ENCODE measurements at regions of chr1 and their contacts with region 1.

Region 1: DNA sequence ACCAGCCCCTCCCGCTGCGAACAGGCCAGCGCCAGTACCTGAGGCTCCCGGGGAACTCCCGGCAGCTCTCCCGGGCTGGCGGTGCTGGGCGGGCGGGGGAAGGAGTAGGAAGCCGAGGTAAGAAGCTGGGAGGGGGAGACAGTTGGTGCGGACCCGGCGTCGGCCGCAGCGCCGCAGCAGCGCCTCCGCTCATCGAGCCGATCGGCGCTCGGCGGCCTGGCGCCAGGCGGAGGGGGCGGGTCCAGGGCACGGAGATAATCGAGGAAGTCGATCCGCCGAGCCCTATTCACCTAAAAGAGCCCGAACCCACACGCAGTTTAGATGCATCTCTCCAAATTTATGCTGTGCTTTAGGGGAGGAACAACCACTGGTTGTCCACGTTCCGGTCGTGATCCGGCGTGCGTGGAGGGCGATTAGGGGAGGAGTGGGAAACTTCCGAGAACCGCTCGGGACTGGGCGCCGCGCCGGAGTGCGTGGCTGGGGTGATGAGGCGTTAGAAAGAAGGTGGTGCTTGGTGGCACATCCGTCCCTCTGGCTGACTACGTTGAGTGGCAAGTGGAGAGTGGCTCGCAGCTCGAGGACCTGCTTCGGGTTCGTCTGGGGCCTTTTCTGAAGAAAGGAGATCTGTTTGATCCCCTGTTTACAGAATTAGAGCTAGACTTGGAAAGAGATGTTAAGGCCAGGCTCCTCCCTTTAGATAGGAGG is at the start of gene VAMP4:
- DNase-seq: peak; percentile 76 to 91 (median 85)
- ATAC-seq: peak; percentile 92 to 93 (median 92)
- H3K4me3 ChIP-seq: peak within 1 kb of the TSS; percentile 80 to 95
- H3K4me3 Mint-ChIP-seq: peak within 1 kb of the TSS; percentile 95 to 100 (median 99)
- H3K27ac ChIP-seq: peak within 1 kb of the TSS; percentile 99
- H3K27ac Mint-ChIP-seq: peak within 1 kb of the TSS; percentile 100
- H3K4me1 ChIP-seq: peaks cover 15 to 21% of the 10 kb centered on the region in 2 experiments
- H3K4me1 Mint-ChIP-seq: peaks cover 55 to 59% (median 56%) of the 10 kb centered on the region in 3 donors
- H3K27me3 ChIP-seq: no peaks in the 10 kb centered on the region
- H3K27me3 Mint-ChIP-seq: no peaks in the 10 kb centered on the region
- total RNA-seq, gene VAMP4: 17.8 to 39.9 (median 33.9) TPM

Region 2: DNA sequence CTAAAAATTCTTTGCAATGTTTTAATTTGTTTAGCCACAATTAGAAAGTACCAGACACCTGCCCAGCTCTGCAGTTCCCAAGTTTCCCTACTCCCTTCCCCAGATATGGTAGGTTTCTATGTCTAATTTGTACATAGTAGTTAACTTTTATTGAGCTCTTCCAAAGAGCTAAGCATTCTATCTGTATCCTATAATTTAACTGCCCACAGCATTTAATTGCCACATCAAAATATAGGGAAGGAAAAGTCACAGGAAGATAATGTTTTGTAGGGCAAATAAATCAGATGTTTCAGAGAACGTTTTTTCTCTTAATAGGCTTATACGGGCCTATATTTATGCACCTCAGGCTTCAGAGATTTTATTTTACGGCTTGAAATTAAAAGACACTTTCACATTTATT is 667.0 kb before region 1 on chr1:
- CTCF ChIA-PET with region 1: no interaction called
- POLR2A ChIA-PET with region 1: no interaction called
- DNase-seq: no peak
- ATAC-seq: no peak
- H3K4me3 ChIP-seq: no peak overlapping the region
- H3K4me3 Mint-ChIP-seq: no peak overlapping the region
- H3K27ac ChIP-seq: no peak overlapping the region
- H3K27ac Mint-ChIP-seq: no peak overlapping the region
- H3K4me1 ChIP-seq: no peaks in the 10 kb centered on the region
- H3K4me1 Mint-ChIP-seq: no peaks in the 10 kb centered on the region
- H3K27me3 ChIP-seq: no peaks in the 10 kb centered on the region
- H3K27me3 Mint-ChIP-seq: peaks cover 1 to 3% of the 10 kb centered on the region in 2 donors

Region 3: GRCh38 chr1:171781176-171781875 is 39.3 kb after region 1 on chr1 and contains the start of gene METTL13:
- CTCF ChIA-PET with region 1: interaction called in 1 of 2 experiments, 9 read pairs
- POLR2A ChIA-PET with region 1: interaction called, 4 to 10 read pairs
- DNase-seq: peak; percentile 95 to 100 (median 98)
- ATAC-seq: peak; percentile 91 to 96 (median 94)
- H3K4me3 ChIP-seq: peak within 1 kb of the TSS; percentile 94 to 97
- H3K4me3 Mint-ChIP-seq: peak within 1 kb of the TSS; percentile 97 to 100 (median 98)
- H3K27ac ChIP-seq: peak within 1 kb of the TSS; percentile 84
- H3K27ac Mint-ChIP-seq: peak within 1 kb of the TSS; percentile 93 to 99
- H3K4me1 ChIP-seq: peaks cover 17 to 44% of the 10 kb centered on the region in 2 experiments
- H3K4me1 Mint-ChIP-seq: peaks cover 56 to 61% (median 60%) of the 10 kb centered on the region in 3 donors
- H3K27me3 ChIP-seq: no peaks in the 10 kb centered on the region
- H3K27me3 Mint-ChIP-seq: no peaks in the 10 kb centered on the region
- total RNA-seq, gene METTL13: 16.0 to 37.6 (median 35.2) TPM

Region 4: GRCh38 chr1:171841050-171841940 is 99.3 kb after region 1 on chr1 and contains the start of gene DNM3:
- CTCF ChIA-PET with region 1: interaction called, 3 to 4 read pairs
- POLR2A ChIA-PET with region 1: interaction called in 1 of 2 experiments, 13 read pairs
- DNase-seq: peak; percentile 47 to 86 (median 72)
- ATAC-seq: peak; percentile 92 to 97 (median 94)
- H3K4me3 ChIP-seq: peak within 1 kb of the TSS; percentile 85
- H3K4me3 Mint-ChIP-seq: peak within 1 kb of the TSS; percentile 80 to 93 (median 86)
- H3K27ac ChIP-seq: no peak within 1 kb of the TSS
- H3K27ac Mint-ChIP-seq: peak within 1 kb of the TSS; percentile 17 to 74
- H3K4me1 ChIP-seq: peaks cover 3 to 17% of the 10 kb centered on the region in 2 experiments
- H3K4me1 Mint-ChIP-seq: peaks cover 14 to 20% (median 19%) of the 10 kb centered on the region in 3 donors
- H3K27me3 ChIP-seq: peaks cover 0 to 10% of the 10 kb centered on the region in 2 experiments
- H3K27me3 Mint-ChIP-seq: peaks cover 7 to 30% of the 10 kb centered on the region in 2 donors
- total RNA-seq, gene DNM3: 2.0 to 2.8 (median 2.4) TPM